GM13977 (cell line): ENCODE measurements at regions of chr13 and their contacts with region 1.

Region 1: DNA sequence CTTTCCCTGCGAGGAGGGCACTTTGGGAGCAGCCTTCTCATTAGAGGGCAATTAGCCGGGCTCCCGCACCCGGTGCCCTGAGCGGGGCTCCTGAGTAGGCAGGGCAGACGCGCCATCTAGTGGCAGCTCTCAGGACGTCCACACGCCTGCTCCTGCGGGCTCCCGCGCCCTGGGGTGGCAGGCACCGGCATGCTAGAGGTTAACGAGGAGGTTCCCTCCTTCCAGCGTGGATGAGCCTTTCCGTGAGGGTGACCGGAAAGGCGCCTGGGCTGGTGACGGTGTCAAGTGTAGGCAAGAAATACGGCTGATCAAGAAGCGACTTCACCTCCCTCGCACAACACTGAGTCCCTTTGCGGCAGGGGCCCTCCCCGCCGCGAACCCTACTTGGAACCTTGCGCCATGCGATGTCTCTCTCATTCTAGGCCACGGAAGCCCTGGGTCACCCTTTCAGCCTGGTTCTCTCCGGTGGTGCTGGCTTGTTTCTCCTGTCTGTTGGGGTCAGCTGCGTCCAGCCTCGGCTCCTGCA is 67.7 kb downstream of the ALOX5AP start:
- DNase-seq: peak; percentile 76
- CTCF ChIP-seq: peak; percentile 97

Region 2: DNA sequence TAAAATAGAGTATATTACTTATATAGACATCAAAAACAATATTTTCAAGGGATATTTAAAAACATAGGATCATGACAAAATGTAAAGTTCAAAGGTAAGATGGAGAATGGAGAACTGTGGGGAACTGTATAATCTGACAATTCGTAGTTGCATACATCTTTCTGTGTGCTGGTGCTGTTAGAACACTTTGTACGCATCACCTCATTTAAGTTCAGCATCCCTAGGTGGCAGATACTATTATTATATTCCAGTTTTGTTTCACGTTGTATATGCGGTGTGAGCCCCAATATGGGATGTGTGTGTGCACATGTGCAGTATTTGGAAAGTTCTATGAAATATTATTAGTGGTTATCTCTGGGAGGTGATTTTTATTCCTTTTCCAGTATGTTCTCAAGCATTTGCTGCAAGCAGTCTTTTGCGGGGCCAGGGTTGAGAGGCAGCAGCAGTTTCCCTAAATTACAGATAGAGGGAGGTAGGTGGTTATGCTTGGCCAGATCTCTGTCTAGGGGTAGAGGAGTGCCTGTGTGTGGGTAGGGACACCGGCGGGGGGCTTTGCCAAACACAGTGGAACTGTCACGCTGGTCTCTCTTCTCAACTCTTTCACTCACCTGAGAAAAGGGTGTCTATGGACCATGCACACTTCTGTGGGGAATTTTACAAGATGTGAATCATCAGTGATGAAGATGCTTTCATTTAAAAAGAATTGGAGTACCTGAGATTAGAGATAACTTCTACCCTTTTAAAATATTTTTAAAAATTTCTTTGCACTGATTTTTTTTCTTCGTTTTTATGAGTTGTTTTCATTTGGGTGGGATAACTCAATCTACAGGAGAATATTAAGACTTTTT is 123.3 kb before region 1 on chr13:
- in situ Hi-C with region 1: loop called (anchors 5 kb)
- DNase-seq: peak; percentile 52
- CTCF ChIP-seq: peak; percentile 70